ENCODE measurements at regions of chr4 and their contacts with region 1.

Region 1: GRCh38 chr4:106334741-106335470 is 18.6 kb downstream of the AIMP1 start:
- DNase-seq: no peak
- H3K4me3 ChIP-seq: no peak overlapping the region
- H3K27ac ChIP-seq: no peak overlapping the region
- H3K4me1 ChIP-seq: no peaks in the 10 kb centered on the region
- H3K27me3 ChIP-seq: no peaks in the 10 kb centered on the region
- CTCF ChIP-seq: no peak
- POLR2A ChIP-seq: no peak

Region 2: GRCh38 chr4:105025263-105025992 is 1309.5 kb before region 1 on chr4:
- intact Hi-C with region 1: loop called (anchors 5 kb)
- DNase-seq: no peak
- H3K4me3 ChIP-seq: no peak overlapping the region
- H3K27ac ChIP-seq: no peak overlapping the region
- H3K4me1 ChIP-seq: no peaks in the 10 kb centered on the region
- H3K27me3 ChIP-seq: no peaks in the 10 kb centered on the region
- CTCF ChIP-seq: no peak
- POLR2A ChIP-seq: no peak

Region 3: GRCh38 chr4:106186201-106186600 is 148.7 kb before region 1 on chr4:
- intact Hi-C with region 1: no loop called
- DNase-seq: no peak
- H3K4me3 ChIP-seq: no peak overlapping the region
- H3K27ac ChIP-seq: no peak overlapping the region
- H3K4me1 ChIP-seq: no peaks in the 10 kb centered on the region
- H3K27me3 ChIP-seq: no peaks in the 10 kb centered on the region
- CTCF ChIP-seq: no peak
- POLR2A ChIP-seq: no peak

Region 4: DNA sequence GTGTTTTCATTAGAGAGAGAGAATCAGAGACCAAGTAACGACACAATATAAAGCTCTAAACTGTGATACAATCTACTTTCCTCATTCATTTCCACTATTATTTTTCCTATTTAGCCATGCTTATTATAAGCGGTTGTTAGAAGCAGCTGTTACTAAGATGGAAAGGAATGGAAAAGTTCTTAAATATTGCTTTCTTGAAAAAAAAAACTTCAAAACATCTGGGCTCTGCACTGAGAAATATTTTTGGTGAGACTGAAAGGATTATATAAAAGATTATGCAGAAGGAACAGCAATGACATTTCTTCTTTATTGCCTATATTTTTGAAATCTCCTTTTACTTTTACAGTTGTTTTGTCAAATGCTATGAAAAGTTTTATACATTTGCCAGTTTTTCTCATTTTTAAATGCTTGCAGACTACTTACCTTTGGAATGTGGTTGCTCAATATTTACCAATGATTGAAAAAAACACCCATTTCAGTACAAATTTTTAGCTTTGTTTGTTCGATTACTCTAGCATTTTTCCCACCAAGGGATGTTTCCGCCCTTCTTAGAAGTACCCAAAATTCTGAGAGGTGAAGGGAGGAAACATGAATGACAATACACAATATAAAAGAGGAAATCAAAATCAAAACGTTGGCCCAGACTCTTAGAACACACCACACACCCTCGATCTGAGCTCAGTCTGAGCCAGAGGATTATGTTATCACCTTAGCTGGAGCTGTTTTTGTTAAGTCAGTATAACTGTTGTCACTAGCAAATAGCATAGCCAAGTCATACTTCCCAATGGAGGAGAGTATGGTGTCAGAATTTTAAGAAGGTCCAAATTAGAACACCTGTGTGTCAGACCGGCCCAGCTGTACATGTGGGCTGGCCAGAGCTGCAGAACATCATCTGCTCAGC is 682.8 kb after region 1 on chr4:
- intact Hi-C with region 1: no loop called
- DNase-seq: no peak
- H3K4me3 ChIP-seq: no peak overlapping the region
- H3K27ac ChIP-seq: no peak overlapping the region
- H3K4me1 ChIP-seq: no peaks in the 10 kb centered on the region
- H3K27me3 ChIP-seq: no peaks in the 10 kb centered on the region
- CTCF ChIP-seq: no peak
- POLR2A ChIP-seq: no peak

Measured in vagina (tissue), 2 donors.